T-cell (primary cell): ENCODE measurements at regions of chr6 and their contacts with region 1.

Region 1: DNA sequence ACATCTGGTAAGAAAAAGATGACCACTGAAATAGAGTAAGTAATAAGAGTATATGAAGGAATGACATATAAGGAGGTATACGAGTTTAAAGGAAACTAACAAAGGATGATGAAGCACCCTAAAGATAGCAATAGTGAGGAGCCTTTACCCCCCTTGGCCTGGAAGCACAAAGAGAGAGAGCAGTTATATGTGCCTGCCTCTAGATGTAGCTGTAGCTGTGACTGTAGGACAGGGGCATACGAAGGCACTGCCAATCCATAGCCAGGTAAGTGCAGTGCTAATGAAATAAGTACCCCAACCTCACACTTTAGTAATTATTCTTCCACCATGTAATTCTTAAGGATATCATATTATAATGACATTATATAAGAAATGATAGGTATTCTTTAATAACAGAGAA is 90.1 kb upstream of the FKBP1C start:
- DNase-seq: no peak
- ATAC-seq: no peak
- H3K4me3 ChIP-seq: no peak overlapping the region
- H3K4me3 Mint-ChIP-seq: no peak overlapping the region
- H3K27ac ChIP-seq: no peak overlapping the region
- H3K27ac Mint-ChIP-seq: no peak overlapping the region
- H3K4me1 ChIP-seq: no peaks in the 10 kb centered on the region
- H3K4me1 Mint-ChIP-seq: no peaks in the 10 kb centered on the region
- H3K27me3 ChIP-seq: no peaks in the 10 kb centered on the region
- H3K27me3 Mint-ChIP-seq: no peaks in the 10 kb centered on the region

Region 2: GRCh38 chr6:63099772-63100459 is 21.2 kb before region 1 on chr6:
- CTCF ChIA-PET with region 1: no interaction called
- POLR2A ChIA-PET with region 1: no interaction called
- DNase-seq: no peak
- ATAC-seq: no peak
- H3K4me3 ChIP-seq: no peak overlapping the region
- H3K4me3 Mint-ChIP-seq: no peak overlapping the region
- H3K27ac ChIP-seq: no peak overlapping the region
- H3K27ac Mint-ChIP-seq: no peak overlapping the region
- H3K4me1 ChIP-seq: no peaks in the 10 kb centered on the region
- H3K4me1 Mint-ChIP-seq: no peaks in the 10 kb centered on the region
- H3K27me3 ChIP-seq: no peaks in the 10 kb centered on the region
- H3K27me3 Mint-ChIP-seq: no peaks in the 10 kb centered on the region

Region 3: GRCh38 chr6:63140692-63141318 is 19.6 kb after region 1 on chr6:
- CTCF ChIA-PET with region 1: no interaction called
- POLR2A ChIA-PET with region 1: no interaction called
- DNase-seq: no peak
- ATAC-seq: no peak
- H3K4me3 ChIP-seq: no peak overlapping the region
- H3K4me3 Mint-ChIP-seq: no peak overlapping the region
- H3K27ac ChIP-seq: no peak overlapping the region
- H3K27ac Mint-ChIP-seq: no peak overlapping the region
- H3K4me1 ChIP-seq: no peaks in the 10 kb centered on the region
- H3K4me1 Mint-ChIP-seq: no peaks in the 10 kb centered on the region
- H3K27me3 ChIP-seq: no peaks in the 10 kb centered on the region
- H3K27me3 Mint-ChIP-seq: no peaks in the 10 kb centered on the region

Region 4: GRCh38 chr6:63486196-63486595 is 365.0 kb after region 1 on chr6:
- CTCF ChIA-PET with region 1: no interaction called
- POLR2A ChIA-PET with region 1: interaction called in 1 of 2 experiments, 10 read pairs
- DNase-seq: no peak
- ATAC-seq: no peak
- H3K4me3 ChIP-seq: no peak overlapping the region
- H3K4me3 Mint-ChIP-seq: no peak overlapping the region
- H3K27ac ChIP-seq: no peak overlapping the region
- H3K27ac Mint-ChIP-seq: no peak overlapping the region
- H3K4me1 ChIP-seq: no peaks in the 10 kb centered on the region
- H3K4me1 Mint-ChIP-seq: no peaks in the 10 kb centered on the region
- H3K27me3 ChIP-seq: peaks cover 0 to 3% of the 10 kb centered on the region in 2 experiments
- H3K27me3 Mint-ChIP-seq: peaks cover 4% of the 10 kb centered on the region in 2 donors